Heart right ventricle (tissue), 16 donors: ENCODE measurements at regions of chr2 and their contacts with region 1.

Region 1: GRCh38 chr2:176638167-176639015 is 369.1 kb downstream of the MTX2 start:
- DNase-seq: peak; percentile 47 to 70
- ATAC-seq: peak; percentile 55 to 94 (median 92)
- H3K4me3 ChIP-seq: peak overlapping the region; percentile 43 to 66 (median 62)
- H3K27ac ChIP-seq: peak overlapping the region in 3 of 10 donors; percentile 45 to 64 (median 58)
- H3K4me1 ChIP-seq: peaks cover 0 to 14% (median 7%) of the 10 kb centered on the region in 9 donors
- H3K27me3 ChIP-seq: peaks cover 5 to 97% (median 87%) of the 10 kb centered on the region in 7 donors
- CTCF ChIP-seq: peak; percentile 68 to 88 (median 77)

Region 2: GRCh38 chr2:176554101-176555048 is 84.0 kb before region 1 on chr2:
- intact Hi-C with region 1: loop called in 6 of 10 experiments (anchors 2 to 10 kb)
- DNase-seq: peak; percentile 11 to 38
- ATAC-seq: peak; percentile 62 to 90 (median 76)
- H3K4me3 ChIP-seq: peak overlapping the region in 9 of 10 donors; percentile 32 to 59 (median 45)
- H3K27ac ChIP-seq: peak overlapping the region in 8 of 10 donors; percentile 15 to 64 (median 53)
- H3K4me1 ChIP-seq: peaks cover 0 to 22% (median 17%) of the 10 kb centered on the region in 9 donors
- H3K27me3 ChIP-seq: peaks cover 0 to 67% (median 35%) of the 10 kb centered on the region in 7 donors
- CTCF ChIP-seq: peak; percentile 66 to 86 (median 76)